ENCODE measurements at regions of chr22 and their contacts with region 1.

Region 1: GRCh38 chr22:31211862-31212730 is at the start of gene LIMK2:
- DNase-seq: peak; percentile 97
- H3K4me3 ChIP-seq: peak within 1 kb of the TSS; percentile 76 to 85 (median 76)
- H3K27ac ChIP-seq: peak within 1 kb of the TSS; percentile 74 to 85 (median 84)
- H3K4me1 ChIP-seq: peaks cover 21 to 54% of the 10 kb centered on the region in 2 donors
- H3K27me3 ChIP-seq: no peaks in the 10 kb centered on the region
- CTCF ChIP-seq: peak; percentile 60 to 93 (median 82)
- POLR2A ChIP-seq: peak in 1 of 2 donors; percentile 79
- total RNA-seq, gene LIMK2: 85.0 to 123 (median 99.4) TPM

Region 2: GRCh38 chr22:31272522-31273446 is 60.7 kb after region 1 on chr22:
- intact Hi-C with region 1: loop called (anchors 5 kb)
- DNase-seq: peak; percentile 70 to 83
- H3K4me3 ChIP-seq: no peak overlapping the region
- H3K27ac ChIP-seq: peak overlapping the region; percentile 89 to 97 (median 90)
- H3K4me1 ChIP-seq: peaks cover 60 to 65% of the 10 kb centered on the region in 2 donors
- H3K27me3 ChIP-seq: no peaks in the 10 kb centered on the region
- CTCF ChIP-seq: peak; percentile 22 to 85 (median 68)
- POLR2A ChIP-seq: no peak

Region 3: GRCh38 chr22:31286360-31287255 is 74.5 kb after region 1 on chr22:
- intact Hi-C with region 1: no loop called
- DNase-seq: no peak
- H3K4me3 ChIP-seq: no peak overlapping the region
- H3K27ac ChIP-seq: peak overlapping the region; percentile 51 to 99 (median 97)
- H3K4me1 ChIP-seq: peaks cover 45 to 47% of the 10 kb centered on the region in 2 donors
- H3K27me3 ChIP-seq: no peaks in the 10 kb centered on the region
- CTCF ChIP-seq: no peak
- POLR2A ChIP-seq: no peak

Measured in thyroid gland (tissue), 4 donors.